Activated T-helper 1 cell treated with anti-CD3 and anti-CD28 coated beads, Interleukin-12 subunit alpha, Interleukin-12 subunit beta, Interleukin-2, Interleukin-4 antibody, amounts not matched to agents 30 ng/mL and 10 ng/mL and 1 ng/mL, durations not matched to agents 14 hours and 24 hours and 36 hours (primary cell): ENCODE measurements at regions of chr6 and their contacts with region 1.

Region 1: DNA sequence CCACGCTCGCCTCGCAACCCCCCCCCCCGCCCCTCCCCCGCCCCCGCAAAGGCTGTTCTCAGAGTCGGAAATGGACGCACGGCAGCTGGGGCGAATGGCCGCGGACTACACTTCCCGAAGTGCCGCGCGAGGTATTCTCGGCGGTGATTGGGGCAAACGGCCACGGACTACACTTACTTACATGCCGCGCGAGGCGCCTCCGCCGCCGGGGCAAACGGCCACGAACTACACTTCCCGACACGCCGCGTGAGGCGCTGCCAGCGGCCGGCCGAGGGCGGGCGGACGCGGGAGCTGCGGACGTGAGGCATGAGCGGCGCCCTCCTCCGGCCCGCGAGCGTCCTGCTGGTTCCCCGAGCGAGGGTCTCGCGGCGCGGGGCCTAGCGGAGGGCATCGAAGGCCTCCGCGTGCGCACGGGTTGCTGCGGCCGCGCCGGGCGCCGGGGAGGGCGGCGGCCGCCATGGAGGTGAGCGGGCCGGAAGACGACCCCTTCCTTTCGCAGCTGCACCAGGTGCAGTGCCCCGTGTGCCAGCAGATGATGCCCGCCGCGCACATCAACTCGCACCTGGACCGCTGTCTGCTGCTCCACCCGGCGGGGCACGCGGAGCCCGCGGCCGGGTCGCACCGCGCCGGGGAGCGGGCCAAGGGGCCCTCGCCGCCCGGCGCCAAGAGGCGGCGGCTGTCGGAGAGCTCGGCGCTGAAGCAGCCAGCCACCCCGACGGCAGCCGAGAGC is at the start of gene WRNIP1:
- DNase-seq: peak; percentile 95
- H3K4me3 Mint-ChIP-seq: peak within 1 kb of the TSS; percentile 96
- H3K27ac Mint-ChIP-seq: peak within 1 kb of the TSS; percentile 98
- H3K4me1 Mint-ChIP-seq: peaks cover 52% of the 10 kb centered on the region
- H3K27me3 Mint-ChIP-seq: no peaks in the 10 kb centered on the region
- total RNA-seq, gene WRNIP1: 47.5 and 51.3 TPM in 2 replicates

Region 2: GRCh38 chr6:2245094-2245876 is 520.0 kb before region 1 on chr6 and contains the start of gene GMDS:
- intact Hi-C with region 1: loop called (anchors 10 kb)
- DNase-seq: peak; percentile 82
- H3K4me3 Mint-ChIP-seq: peak within 1 kb of the TSS; percentile 92
- H3K27ac Mint-ChIP-seq: peak within 1 kb of the TSS; percentile 89
- H3K4me1 Mint-ChIP-seq: peaks cover 76% of the 10 kb centered on the region
- H3K27me3 Mint-ChIP-seq: no peaks in the 10 kb centered on the region
- total RNA-seq, gene GMDS: 44.5 and 53.4 TPM in 2 replicates

Region 3: GRCh38 chr6:2674857-2675256 is 90.5 kb before region 1 on chr6:
- intact Hi-C with region 1: no loop called
- DNase-seq: no peak
- H3K4me3 Mint-ChIP-seq: no peak overlapping the region
- H3K27ac Mint-ChIP-seq: no peak overlapping the region
- H3K4me1 Mint-ChIP-seq: no peaks in the 10 kb centered on the region
- H3K27me3 Mint-ChIP-seq: peaks cover 3% of the 10 kb centered on the region

Region 4: GRCh38 chr6:2791124-2791974 is 26.0 kb after region 1 on chr6:
- intact Hi-C with region 1: loop called (anchors 1 kb)
- DNase-seq: peak; percentile 46
- H3K4me3 Mint-ChIP-seq: peak overlapping the region; percentile 21
- H3K27ac Mint-ChIP-seq: peak overlapping the region; percentile 88
- H3K4me1 Mint-ChIP-seq: peaks cover 40% of the 10 kb centered on the region
- H3K27me3 Mint-ChIP-seq: no peaks in the 10 kb centered on the region

Region 5: DNA sequence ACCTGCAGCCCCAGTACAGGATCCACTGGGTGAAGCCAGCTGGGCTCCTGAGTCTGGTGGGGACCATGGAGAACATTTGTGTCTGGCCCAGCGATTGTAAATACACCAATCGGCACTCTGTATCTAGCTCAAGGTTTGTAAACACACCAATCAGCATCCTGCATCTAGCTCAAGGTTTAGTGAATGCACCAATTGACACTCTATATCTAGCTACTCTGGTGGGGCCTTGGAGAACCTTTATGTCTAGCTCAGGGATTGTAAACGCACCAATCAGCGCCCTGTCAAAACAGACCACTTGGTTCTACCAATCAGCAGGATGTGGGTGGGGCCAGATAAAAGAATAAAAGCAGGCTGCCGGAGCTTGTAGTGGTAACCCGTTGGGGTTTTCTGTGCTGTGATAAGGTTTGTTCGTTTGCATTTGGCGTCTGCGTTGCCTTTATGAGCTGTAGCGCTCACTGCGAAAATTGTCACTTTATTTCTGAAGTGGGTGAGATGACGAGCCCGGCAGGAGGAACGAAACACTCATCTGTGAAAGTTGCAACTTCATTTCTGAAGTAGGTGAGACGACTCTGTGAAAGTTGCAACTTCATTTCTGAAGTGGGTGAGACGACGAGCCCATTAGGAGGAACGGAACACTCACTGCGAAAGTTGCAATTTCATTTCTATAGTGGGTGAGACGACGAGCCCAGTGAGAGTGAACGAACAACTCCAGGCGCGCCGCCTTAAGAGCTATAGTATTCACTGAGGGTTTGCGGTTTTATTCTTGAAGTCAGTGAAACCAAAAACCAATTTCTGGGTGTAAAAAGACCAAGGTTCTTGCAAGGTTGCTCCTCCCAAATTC is 174.9 kb after region 1 on chr6:
- intact Hi-C with region 1: loop called (anchors 1 kb)
- DNase-seq: peak; percentile 78
- H3K4me3 Mint-ChIP-seq: peak overlapping the region; percentile 48
- H3K27ac Mint-ChIP-seq: peak overlapping the region; percentile 89
- H3K4me1 Mint-ChIP-seq: peaks cover 55% of the 10 kb centered on the region
- H3K27me3 Mint-ChIP-seq: peaks cover 13% of the 10 kb centered on the region

Region 6: GRCh38 chr6:3118353-3119039 is 353.2 kb after region 1 on chr6 and contains the start of gene BPHL:
- intact Hi-C with region 1: loop called (anchors 1 kb)
- DNase-seq: peak; percentile 99
- H3K4me3 Mint-ChIP-seq: peak within 1 kb of the TSS; percentile 82
- H3K27ac Mint-ChIP-seq: peak within 1 kb of the TSS; percentile 78
- H3K4me1 Mint-ChIP-seq: peaks cover 23% of the 10 kb centered on the region
- H3K27me3 Mint-ChIP-seq: no peaks in the 10 kb centered on the region
- total RNA-seq, gene BPHL: 6.6 and 7.9 TPM in 2 replicates

Region 7: DNA sequence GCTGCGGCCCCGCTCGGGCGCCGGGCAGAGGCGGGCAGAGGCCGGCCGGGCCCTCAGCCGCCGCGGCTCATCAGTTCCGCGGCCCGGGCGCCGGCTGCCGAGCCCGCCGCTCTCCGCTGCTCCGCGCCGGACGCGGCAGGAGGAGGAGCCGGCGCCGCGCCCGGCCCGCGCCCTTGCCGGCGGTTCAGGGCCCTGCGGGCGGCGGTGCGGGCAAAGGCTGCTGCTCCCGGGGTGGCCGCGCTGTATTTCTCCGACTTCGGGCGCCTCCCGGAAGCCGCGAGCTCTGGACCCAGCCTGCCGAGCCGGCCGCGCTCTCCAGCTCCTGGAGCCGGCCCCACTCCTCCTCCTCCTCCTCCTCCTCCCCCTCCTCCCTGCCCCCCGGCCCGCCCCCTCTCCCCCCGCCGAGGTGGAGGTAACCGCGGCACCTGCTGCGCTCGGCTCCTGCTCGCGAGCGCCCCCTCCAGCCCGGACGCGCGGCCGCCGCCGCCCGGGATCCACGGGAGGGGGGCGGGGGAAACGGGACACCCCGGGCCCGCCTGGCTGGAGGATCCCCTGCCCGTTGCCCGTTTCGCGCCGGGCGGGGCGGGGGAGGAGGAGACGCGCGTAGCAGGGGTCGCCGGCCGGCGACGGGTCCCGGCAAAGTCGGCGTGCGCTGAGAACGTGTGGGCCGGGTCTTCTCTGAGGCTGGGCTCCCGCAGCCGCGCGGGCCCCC is 691.6 kb after region 1 on chr6 and contains the start of gene SLC22A23:
- intact Hi-C with region 1: loop called (anchors 10 kb)
- DNase-seq: peak; percentile 42
- H3K4me3 Mint-ChIP-seq: peak within 1 kb of the TSS; percentile 81
- H3K27ac Mint-ChIP-seq: peak within 1 kb of the TSS; percentile 70
- H3K4me1 Mint-ChIP-seq: peaks cover 7% of the 10 kb centered on the region
- H3K27me3 Mint-ChIP-seq: peaks cover 46% of the 10 kb centered on the region
- total RNA-seq, gene SLC22A23: 0.05 and 0.39 TPM in 2 replicates